CD4-positive, alpha-beta memory T cell (primary cell): ENCODE measurements at regions of chr20 and their contacts with region 1.

Region 1: DNA sequence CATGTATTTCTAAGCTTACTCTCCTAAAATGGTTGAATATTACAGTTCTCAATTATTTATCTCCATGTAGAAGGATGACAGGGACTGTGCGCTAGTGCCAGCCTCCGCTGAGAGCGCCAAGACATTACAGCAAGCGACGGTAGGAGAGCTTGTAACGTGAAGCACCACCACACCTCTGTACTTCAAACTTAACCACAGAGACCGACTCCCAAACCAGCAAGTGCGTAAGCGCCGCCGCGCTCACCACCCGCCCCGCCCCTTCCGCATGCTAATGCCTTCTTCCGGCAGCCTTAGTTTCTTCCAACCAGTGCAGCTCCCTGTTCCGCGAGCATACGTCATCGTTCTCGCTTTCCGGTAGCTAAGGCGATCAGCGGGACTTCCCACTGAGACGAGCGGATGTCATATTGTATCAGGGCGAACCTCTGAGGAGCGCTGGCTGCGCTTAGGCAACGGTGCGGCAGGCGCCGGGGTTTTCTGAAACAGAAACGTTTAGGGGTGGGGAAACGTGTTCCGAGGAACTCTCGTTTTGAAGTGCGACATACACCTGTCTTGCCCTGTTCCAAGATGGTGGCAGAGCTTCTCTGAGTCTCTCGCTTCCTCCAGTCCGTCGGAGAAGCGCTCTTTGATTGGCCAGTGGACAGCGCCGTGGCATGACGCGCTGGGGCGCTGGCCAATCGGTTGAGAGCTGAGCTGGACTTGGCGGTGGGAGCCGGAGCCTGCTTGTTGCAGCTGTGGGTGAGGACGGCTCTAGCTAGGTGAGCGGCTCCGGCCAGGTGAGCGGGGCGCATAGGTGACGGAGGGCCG is at the start of gene SEC23B:
- DNase-seq: peak; percentile 99 to 100 (median 99)
- H3K4me3 ChIP-seq: peak within 1 kb of the TSS; percentile 78 to 82
- H3K4me3 Mint-ChIP-seq: peak within 1 kb of the TSS; percentile 99 to 100 (median 100)
- H3K27ac ChIP-seq: peak within 1 kb of the TSS; percentile 87
- H3K27ac Mint-ChIP-seq: peak within 1 kb of the TSS; percentile 95 to 100 (median 100)
- H3K4me1 ChIP-seq: peaks cover 22% of the 10 kb centered on the region
- H3K4me1 Mint-ChIP-seq: peaks cover 24 to 48% (median 39%) of the 10 kb centered on the region in 4 donors
- H3K27me3 ChIP-seq: no peaks in the 10 kb centered on the region
- H3K27me3 Mint-ChIP-seq: peaks cover 0 to under 1% of the 10 kb centered on the region in 2 donors
- total RNA-seq, gene SEC23B: 46.8 to 50.0 TPM

Region 2: DNA sequence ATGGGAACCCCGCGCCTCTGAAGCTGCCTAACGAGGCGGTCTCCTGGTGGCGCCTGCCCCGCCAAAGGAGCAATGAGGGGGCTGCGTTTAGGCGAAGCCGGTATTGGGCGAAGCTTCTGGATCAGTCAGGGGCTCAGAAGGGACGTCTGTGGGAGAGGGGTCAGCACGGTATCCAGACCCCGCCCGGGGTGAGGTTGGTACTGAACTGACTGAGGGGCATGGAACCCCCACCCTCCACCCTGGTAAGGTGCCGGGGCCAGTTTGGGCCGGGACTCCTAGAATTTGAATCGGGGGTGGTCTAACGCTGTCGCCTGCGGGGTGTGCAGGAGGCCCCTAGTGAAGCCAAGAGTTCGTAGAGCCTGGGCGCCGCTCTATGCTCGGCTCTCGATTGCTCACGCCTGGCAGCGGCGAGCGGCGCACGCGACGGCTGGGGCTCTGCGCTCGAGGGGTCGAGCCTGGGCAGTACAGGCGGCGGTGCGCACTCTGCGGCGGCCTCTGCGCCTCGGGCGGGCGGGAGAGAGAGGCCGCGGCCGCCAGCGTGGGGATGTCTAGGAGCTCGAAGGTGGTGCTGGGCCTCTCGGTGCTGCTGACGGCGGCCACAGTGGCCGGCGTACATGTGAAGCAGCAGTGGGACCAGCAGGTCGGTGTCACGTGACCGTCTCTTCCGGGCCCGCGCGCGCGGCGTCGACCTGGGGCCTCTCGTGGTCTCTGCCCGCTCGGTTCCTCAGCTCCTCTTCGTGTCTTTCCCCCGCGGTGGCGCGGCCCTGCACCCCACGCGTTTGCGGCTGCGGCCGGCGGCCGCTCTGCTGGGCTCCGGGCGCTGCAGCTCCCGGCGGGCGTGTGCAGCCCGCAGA is 369.8 kb before region 1 on chr20 and contains the starts of genes KAT14 and PET117:
- CTCF ChIA-PET with region 1: no interaction called
- POLR2A ChIA-PET with region 1: interaction called, 14 read pairs
- intact Hi-C with region 1: loop called (anchors 2 kb)
- DNase-seq: peak; percentile 89 to 95 (median 92)
- H3K4me3 ChIP-seq: peak within 1 kb of the TSS; percentile 71 to 87
- H3K4me3 Mint-ChIP-seq: peak within 1 kb of the TSS; percentile 88 to 94 (median 90)
- H3K27ac ChIP-seq: peak within 1 kb of the TSS; percentile 78
- H3K27ac Mint-ChIP-seq: peak within 1 kb of the TSS; percentile 89 to 96 (median 92)
- H3K4me1 ChIP-seq: peaks cover 34% of the 10 kb centered on the region
- H3K4me1 Mint-ChIP-seq: peaks cover 22 to 43% (median 30%) of the 10 kb centered on the region in 4 donors
- H3K27me3 ChIP-seq: no peaks in the 10 kb centered on the region
- H3K27me3 Mint-ChIP-seq: no peaks in the 10 kb centered on the region
- total RNA-seq, gene KAT14: 22.4 to 24.0 TPM
- total RNA-seq, gene PET117: 14.1 to 15.0 TPM

Region 3: DNA sequence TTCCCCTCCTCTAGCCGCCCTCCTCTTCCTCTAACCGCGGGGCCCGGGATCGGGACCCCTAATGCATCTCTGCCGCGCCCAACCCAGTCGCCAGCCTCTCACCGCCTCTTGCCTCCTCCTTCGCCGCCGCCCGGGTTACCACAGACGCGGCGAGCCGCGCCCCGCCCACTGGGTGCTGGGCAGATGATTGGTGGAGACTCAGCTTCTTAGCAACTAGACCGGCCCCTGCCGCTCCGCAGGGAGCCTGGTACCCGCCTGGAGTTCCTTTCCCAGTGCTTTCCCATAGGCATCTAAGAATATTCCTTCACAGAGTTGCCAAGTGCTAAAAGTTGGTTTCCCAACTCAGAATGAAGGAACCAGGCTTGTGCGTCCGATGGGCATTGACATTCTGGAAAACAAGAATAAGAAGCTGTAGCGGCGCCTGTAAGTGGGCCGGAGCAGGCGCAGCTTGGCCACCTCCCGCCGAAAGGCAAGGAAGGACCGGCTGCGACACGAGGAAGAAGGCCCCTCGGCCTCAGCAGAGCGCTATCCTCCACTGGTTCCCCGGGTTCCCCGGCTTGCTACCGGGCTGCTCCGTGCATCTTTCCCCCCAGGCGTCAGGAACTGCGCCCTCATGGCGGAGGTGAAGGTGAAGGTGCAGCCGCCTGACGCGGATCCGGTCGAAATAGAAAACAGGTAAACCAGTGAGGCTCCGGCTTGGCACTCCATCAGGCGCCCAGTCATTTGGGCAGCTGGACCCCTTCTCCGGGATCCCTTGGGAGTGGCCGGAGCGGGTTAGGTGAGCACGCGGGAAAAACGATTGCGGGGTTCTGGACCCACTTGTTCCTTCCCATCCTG is 40.3 kb before region 1 on chr20 and contains the starts of genes DZANK1 and POLR3F:
- CTCF ChIA-PET with region 1: interaction called, 12 read pairs
- POLR2A ChIA-PET with region 1: interaction called, 118 read pairs
- intact Hi-C with region 1: loop called (anchors 1 kb)
- DNase-seq: peak; percentile 92 to 94 (median 93)
- H3K4me3 ChIP-seq: peak within 1 kb of the TSS; percentile 94 to 99
- H3K4me3 Mint-ChIP-seq: peak within 1 kb of the TSS; percentile 90 to 100 (median 96)
- H3K27ac ChIP-seq: peak within 1 kb of the TSS; percentile 78
- H3K27ac Mint-ChIP-seq: peak within 1 kb of the TSS; percentile 92 to 100 (median 99)
- H3K4me1 ChIP-seq: peaks cover 18% of the 10 kb centered on the region
- H3K4me1 Mint-ChIP-seq: peaks cover 9 to 37% (median 23%) of the 10 kb centered on the region in 4 donors
- H3K27me3 ChIP-seq: no peaks in the 10 kb centered on the region
- H3K27me3 Mint-ChIP-seq: no peaks in the 10 kb centered on the region
- total RNA-seq, gene DZANK1: 2.7 to 3.0 TPM
- total RNA-seq, gene POLR3F: 7.8 to 9.1 TPM

Region 4: GRCh38 chr20:18566892-18567742 is 59.7 kb after region 1 on chr20 and contains the start of gene SMIM26:
- CTCF ChIA-PET with region 1: no interaction called
- POLR2A ChIA-PET with region 1: interaction called, 63 read pairs
- intact Hi-C with region 1: loop called (anchors 1 kb)
- DNase-seq: peak; percentile 92 to 94 (median 93)
- H3K4me3 ChIP-seq: peak within 1 kb of the TSS; percentile 77 to 78
- H3K4me3 Mint-ChIP-seq: peak within 1 kb of the TSS; percentile 94 to 99 (median 97)
- H3K27ac ChIP-seq: peak within 1 kb of the TSS; percentile 96
- H3K27ac Mint-ChIP-seq: peak within 1 kb of the TSS; percentile 93 to 100 (median 99)
- H3K4me1 ChIP-seq: peaks cover 13% of the 10 kb centered on the region
- H3K4me1 Mint-ChIP-seq: peaks cover 9 to 34% (median 14%) of the 10 kb centered on the region in 4 donors
- H3K27me3 ChIP-seq: no peaks in the 10 kb centered on the region
- H3K27me3 Mint-ChIP-seq: no peaks in the 10 kb centered on the region
- total RNA-seq, gene SMIM26: 60.2 to 64.2 TPM

Region 5: DNA sequence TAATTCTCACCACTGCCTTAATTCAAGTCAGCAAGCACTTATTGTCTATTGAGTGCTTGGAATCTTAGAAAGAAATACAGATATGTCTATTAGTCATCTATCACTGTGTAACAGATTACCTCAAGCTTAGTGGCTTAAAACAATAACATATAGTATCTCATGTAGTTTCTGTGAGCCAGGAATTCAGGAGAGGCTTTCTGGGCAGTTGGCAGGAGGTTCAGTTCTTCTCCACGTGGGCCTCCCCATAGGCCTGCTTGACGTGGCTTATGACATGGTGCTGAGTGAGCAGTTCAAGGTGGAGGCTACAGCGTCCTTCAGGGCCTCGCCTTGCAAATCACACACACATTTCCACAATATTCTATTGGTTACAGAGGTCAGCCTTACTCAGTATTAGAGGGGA is 150.2 kb after region 1 on chr20:
- CTCF ChIA-PET with region 1: no interaction called
- POLR2A ChIA-PET with region 1: no interaction called
- intact Hi-C with region 1: no loop called
- DNase-seq: no peak
- H3K4me3 ChIP-seq: no peak overlapping the region
- H3K4me3 Mint-ChIP-seq: no peak overlapping the region
- H3K27ac ChIP-seq: no peak overlapping the region
- H3K27ac Mint-ChIP-seq: peak overlapping the region in 1 of 7 donors; percentile 77
- H3K4me1 ChIP-seq: no peaks in the 10 kb centered on the region
- H3K4me1 Mint-ChIP-seq: peaks cover 0 to 6% (median 2%) of the 10 kb centered on the region in 4 donors
- H3K27me3 ChIP-seq: no peaks in the 10 kb centered on the region
- H3K27me3 Mint-ChIP-seq: no peaks in the 10 kb centered on the region

Region 6: GRCh38 chr20:18793625-18794427 is 286.4 kb after region 1 on chr20:
- CTCF ChIA-PET with region 1: interaction called, 3 read pairs
- POLR2A ChIA-PET with region 1: interaction called, 12 read pairs
- intact Hi-C with region 1: loop called (anchors 1 kb)
- DNase-seq: peak; percentile 85 to 94 (median 89)
- H3K4me3 ChIP-seq: peak overlapping the region; percentile 36 to 80
- H3K4me3 Mint-ChIP-seq: peak overlapping the region; percentile 94 to 98 (median 96)
- H3K27ac ChIP-seq: peak overlapping the region; percentile 85
- H3K27ac Mint-ChIP-seq: peak overlapping the region; percentile 92 to 100 (median 100)
- H3K4me1 ChIP-seq: peaks cover 12% of the 10 kb centered on the region
- H3K4me1 Mint-ChIP-seq: peaks cover 5 to 17% (median 11%) of the 10 kb centered on the region in 4 donors
- H3K27me3 ChIP-seq: peaks cover 5% of the 10 kb centered on the region
- H3K27me3 Mint-ChIP-seq: peaks cover 15 to 17% of the 10 kb centered on the region in 2 donors